Head of caudate nucleus (tissue), 42 donors: ENCODE measurements at regions of chr1 and their contacts with region 1.

Region 1: GRCh38 chr1:114581335-114582287 is at the start of gene BCAS2:
- DNase-seq: peak; percentile 90 to 99 (median 97)

Region 2: DNA sequence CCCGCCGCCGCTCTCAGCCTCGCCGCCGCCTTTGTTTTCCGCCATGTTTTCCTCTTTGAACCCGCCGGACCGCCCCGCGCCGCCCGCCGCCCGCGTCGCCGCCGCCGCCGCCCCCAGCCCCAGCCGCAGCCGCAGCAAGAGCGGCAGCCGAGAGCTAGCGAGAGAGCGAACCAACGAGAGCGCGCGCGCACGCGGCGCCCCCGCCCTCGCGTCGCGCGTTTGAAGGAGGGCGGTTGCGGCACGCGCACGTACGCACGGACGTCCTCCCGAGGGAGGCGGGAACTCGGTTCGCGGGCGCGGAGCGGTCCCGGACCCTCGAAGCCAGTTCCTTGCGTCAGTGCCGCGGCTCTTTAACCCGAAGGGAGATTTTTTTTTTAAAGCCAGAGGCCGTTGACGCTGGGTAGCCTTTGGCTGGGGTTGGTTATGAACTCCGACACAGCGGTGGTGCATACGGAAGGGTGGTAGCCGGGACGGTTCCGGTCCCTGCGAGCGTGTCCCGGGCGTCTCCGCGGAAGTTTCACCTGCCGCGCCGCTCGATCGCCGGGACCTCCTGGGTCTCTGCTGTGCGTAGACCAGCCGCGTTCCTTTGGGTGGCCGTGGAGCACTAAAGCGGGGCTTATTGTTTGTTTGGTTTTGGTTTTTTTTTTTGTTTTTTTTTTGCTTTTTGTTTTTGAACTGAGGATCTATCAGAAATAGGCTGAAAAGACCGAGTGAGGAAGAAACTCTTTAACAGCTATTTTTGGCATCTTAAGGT is 70.4 kb before region 1 on chr1 and contains the start of gene TRIM33:
- intact Hi-C with region 1: loop called (anchors 5 kb)
- DNase-seq: peak; percentile 78 to 96 (median 92)

Region 3: GRCh38 chr1:114757455-114758250 is 176.0 kb after region 1 on chr1 and contains the start of gene CSDE1:
- intact Hi-C with region 1: loop called (anchors 2 kb)
- DNase-seq: peak; percentile 93 to 99 (median 97)